ENCODE measurements at regions of chr1 and their contacts with region 1.

Region 1: DNA sequence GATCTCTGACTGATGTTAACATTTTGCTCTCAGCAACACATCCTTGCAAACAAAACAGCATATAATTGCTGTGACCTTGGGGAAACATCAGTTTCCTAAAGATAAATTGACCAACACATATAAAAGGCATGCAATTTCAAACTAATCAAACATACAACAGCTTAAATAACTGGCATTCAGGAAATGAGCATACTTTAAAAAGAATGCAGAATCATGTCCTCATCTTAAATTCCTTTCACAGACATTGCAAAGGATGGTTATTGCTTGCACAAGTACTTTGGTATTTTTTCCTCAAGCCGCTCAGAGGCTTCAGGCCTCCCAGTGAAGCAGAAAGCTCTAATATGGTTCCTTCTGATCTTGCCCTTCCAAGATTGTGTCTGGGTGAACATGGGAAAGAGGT is 53.4 kb upstream of the RGS18 start:
- DNase-seq: no peak
- H3K4me3 ChIP-seq: no peak overlapping the region
- CTCF ChIP-seq: no peak
- POLR2A ChIP-seq: no peak

Region 2: DNA sequence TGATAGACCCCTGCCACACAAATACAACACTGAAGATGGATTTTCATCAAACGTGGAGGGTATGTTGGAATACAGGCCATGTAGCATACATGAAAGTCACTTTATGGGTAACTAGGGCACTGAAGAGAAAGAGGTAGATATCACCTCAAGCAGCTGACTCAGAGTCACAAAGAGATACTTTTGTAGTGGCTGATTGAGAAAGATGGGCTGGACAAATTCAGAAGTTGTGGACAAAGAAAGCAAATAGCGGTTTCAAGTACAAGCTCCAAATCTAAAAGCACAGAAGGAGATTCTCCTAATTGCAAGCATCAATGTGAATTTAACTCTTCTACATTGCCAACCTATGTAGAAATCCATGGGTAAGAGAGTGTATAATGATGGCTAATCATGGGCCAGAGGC is 18.3 kb after region 1 on chr1:
- intact Hi-C with region 1: loop called (anchors 2 kb)
- DNase-seq: no peak
- H3K4me3 ChIP-seq: no peak overlapping the region
- CTCF ChIP-seq: no peak
- POLR2A ChIP-seq: no peak

Region 3: DNA sequence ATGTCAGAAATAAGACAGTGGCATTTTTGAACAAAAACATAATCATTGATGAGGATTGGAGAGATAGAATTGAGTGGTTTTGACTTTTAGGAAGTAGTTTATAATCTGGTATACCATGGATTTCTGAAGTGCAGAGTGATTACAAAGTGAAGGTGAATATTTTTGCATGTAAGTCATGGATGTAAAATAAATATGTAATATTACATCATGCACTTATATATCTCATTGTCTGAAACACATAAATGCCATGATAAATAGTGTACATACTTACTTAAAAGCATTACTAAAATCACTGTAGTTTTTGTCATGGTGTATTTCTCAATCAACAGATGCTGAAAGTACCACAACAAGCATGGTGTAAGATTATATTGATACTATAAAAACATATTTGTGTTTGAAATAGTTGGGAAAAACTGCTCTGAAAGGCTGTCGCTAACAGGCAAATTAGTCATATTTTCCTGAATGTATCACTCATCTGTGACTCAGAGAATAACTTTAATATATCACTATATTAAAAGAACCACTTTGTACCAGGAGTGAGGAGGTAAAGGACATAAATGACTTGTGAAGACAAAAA is 28.6 kb after region 1 on chr1:
- intact Hi-C with region 1: no loop called
- DNase-seq: no peak
- H3K4me3 ChIP-seq: no peak overlapping the region
- CTCF ChIP-seq: no peak
- POLR2A ChIP-seq: no peak

Region 4: GRCh38 chr1:192167911-192168700 is 63.2 kb after region 1 on chr1:
- intact Hi-C with region 1: no loop called
- DNase-seq: no peak
- H3K4me3 ChIP-seq: no peak overlapping the region
- CTCF ChIP-seq: no peak
- POLR2A ChIP-seq: no peak

Region 5: DNA sequence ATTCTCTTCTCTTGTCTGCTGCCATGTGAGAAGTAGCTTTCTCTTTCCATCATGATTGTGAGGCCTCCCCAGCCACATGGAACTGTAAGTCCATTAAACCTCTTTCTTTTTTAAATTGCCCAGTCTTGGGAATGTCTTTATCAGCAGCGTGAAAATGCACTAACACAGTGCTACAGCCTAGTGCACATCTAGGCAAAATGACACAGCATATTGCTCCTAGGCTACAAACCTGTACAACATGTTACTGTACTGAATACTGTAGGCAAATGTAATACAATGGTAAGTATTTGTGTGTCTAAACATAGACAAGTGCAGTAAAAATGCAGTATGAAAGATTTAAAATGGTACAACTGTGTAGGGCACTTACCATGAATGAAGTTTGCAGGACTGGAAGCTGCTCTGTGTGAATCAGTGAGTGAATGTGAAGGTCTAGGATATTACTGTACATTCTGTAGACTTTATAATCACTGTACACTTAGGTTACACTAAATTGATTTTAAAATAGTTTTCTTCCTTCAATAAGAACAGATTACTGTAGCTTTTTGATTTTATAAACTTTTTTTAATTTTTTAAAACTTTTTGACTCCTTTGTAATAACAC is 281.3 kb after region 1 on chr1:
- intact Hi-C with region 1: no loop called
- DNase-seq: no peak
- H3K4me3 ChIP-seq: no peak overlapping the region
- CTCF ChIP-seq: no peak
- POLR2A ChIP-seq: no peak

Measured in lower leg skin (tissue), 4 donors.